HCT116 (cell line): ENCODE measurements at regions of chr7 and their contacts with region 1.

Region 1: DNA sequence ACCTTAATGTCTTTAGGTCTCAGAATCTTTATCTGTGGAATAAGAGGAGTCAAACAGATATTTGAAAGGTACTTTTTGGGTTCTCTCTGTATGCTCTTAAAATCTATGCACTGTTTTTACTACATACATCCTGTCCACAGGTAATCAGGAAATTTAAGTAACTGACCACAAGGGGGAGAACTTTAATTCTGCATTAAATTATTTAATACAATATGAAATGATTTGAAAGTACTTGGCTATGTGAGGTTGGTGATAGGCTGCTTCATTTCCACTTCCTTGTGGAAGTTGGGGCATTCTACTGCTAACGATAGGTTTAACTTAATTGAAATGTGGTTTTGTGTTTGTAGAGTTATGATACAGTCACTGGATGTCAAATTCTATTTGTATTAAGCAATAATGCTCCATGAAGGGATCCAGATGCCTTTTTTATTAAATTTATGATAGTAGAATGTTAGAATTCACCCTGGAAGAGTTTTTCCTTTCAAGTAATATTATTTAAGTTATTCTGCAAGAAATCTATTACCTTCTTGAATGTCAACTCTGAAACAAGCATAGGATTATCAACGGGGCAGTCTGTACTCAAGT is 6.0 kb downstream of the TEX47 start:
- DNase-seq: peak; percentile 23
- ATAC-seq: peak; percentile 79
- H3K4me3 ChIP-seq: no peak overlapping the region
- H3K27ac ChIP-seq: no peak overlapping the region
- H3K4me1 ChIP-seq: no peaks in the 10 kb centered on the region
- H3K27me3 ChIP-seq: no peaks in the 10 kb centered on the region
- CTCF ChIP-seq: peak; percentile 22 to 63 (median 31); a peak in 4 of 6 replicates
- POLR2A ChIP-seq: no peak
- RAD21 ChIP-seq: peak; percentile 52; the same call in 1 of the 2 replicates

Region 2: DNA sequence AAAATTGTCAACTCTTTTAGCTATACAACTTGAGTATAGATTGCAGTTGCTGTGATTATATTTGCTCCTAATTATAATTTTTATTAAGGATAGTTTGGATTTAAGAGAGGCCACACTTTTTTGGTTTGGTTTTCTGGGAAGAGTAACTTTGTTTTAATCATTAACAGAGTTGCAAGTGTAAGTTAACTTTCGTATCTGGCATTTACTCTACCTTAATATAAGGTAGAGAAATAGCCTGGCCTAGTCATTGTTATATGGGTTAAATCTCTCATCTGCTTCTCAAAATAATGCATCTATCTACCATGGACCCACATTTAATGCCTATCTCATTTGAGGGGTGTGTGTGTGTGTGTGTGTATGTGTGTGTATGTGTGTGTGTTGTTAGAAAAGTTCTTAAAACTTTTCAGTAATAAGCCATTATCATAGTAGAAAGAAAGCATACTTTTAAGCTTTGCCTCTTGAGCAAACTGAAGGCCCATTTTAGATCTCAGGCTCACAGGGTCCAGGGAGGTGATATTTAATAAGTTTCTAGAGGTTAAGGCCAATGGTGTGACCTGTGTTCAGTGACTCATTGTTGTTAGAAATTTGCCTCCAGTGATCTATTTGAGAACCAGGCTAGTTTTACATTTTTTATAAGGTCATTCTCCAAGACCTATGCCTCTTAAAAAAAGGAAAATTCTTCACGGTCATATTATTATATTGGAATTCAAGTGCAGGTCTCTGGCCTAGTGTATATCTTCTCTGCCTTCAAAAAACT is 16.9 kb after region 1 on chr7:
- CTCF ChIA-PET with region 1: no interaction called
- POLR2A ChIA-PET with region 1: no interaction called
- RAD21 ChIA-PET with region 1: no interaction called
- intact Hi-C with region 1: no loop called
- DNase-seq: no peak
- ATAC-seq: no peak
- H3K4me3 ChIP-seq: no peak overlapping the region
- H3K27ac ChIP-seq: no peak overlapping the region
- H3K4me1 ChIP-seq: no peaks in the 10 kb centered on the region
- H3K27me3 ChIP-seq: no peaks in the 10 kb centered on the region
- CTCF ChIP-seq: no peak
- POLR2A ChIP-seq: no peak
- RAD21 ChIP-seq: no peak

Region 3: GRCh38 chr7:88818552-88818951 is 29.0 kb after region 1 on chr7:
- CTCF ChIA-PET with region 1: no interaction called
- POLR2A ChIA-PET with region 1: no interaction called
- RAD21 ChIA-PET with region 1: no interaction called
- intact Hi-C with region 1: no loop called
- DNase-seq: no peak
- ATAC-seq: no peak
- H3K4me3 ChIP-seq: no peak overlapping the region
- H3K27ac ChIP-seq: no peak overlapping the region
- H3K4me1 ChIP-seq: no peaks in the 10 kb centered on the region
- H3K27me3 ChIP-seq: no peaks in the 10 kb centered on the region
- CTCF ChIP-seq: no peak
- POLR2A ChIP-seq: no peak
- RAD21 ChIP-seq: no peak

Region 4: GRCh38 chr7:89622838-89623672 is 833.5 kb after region 1 on chr7:
- CTCF ChIA-PET with region 1: no interaction called
- POLR2A ChIA-PET with region 1: no interaction called
- RAD21 ChIA-PET with region 1: no interaction called
- intact Hi-C with region 1: loop called (anchors 1 kb)
- DNase-seq: peak; percentile 23
- ATAC-seq: peak; percentile 67
- H3K4me3 ChIP-seq: no peak overlapping the region
- H3K27ac ChIP-seq: no peak overlapping the region
- H3K4me1 ChIP-seq: no peaks in the 10 kb centered on the region
- H3K27me3 ChIP-seq: no peaks in the 10 kb centered on the region
- CTCF ChIP-seq: peak; percentile 24 to 76 (median 71); a peak in 5 of 6 replicates
- POLR2A ChIP-seq: no peak
- RAD21 ChIP-seq: peak; percentile 68

Region 5: GRCh38 chr7:90119178-90119971 is 1329.8 kb after region 1 on chr7:
- CTCF ChIA-PET with region 1: no interaction called
- POLR2A ChIA-PET with region 1: no interaction called
- RAD21 ChIA-PET with region 1: no interaction called
- intact Hi-C with region 1: loop called (anchors 10 kb)
- DNase-seq: no peak
- ATAC-seq: no peak
- H3K4me3 ChIP-seq: no peak overlapping the region
- H3K27ac ChIP-seq: no peak overlapping the region
- H3K4me1 ChIP-seq: no peaks in the 10 kb centered on the region
- H3K27me3 ChIP-seq: no peaks in the 10 kb centered on the region
- CTCF ChIP-seq: no peak
- POLR2A ChIP-seq: no peak
- RAD21 ChIP-seq: no peak